Activated naive CD4-positive, alpha-beta T cell treated with anti-CD3 and anti-CD28 coated beads for 36 hours (primary cell): ENCODE measurements at regions of chr6 and their contacts with region 1.

Region 1: DNA sequence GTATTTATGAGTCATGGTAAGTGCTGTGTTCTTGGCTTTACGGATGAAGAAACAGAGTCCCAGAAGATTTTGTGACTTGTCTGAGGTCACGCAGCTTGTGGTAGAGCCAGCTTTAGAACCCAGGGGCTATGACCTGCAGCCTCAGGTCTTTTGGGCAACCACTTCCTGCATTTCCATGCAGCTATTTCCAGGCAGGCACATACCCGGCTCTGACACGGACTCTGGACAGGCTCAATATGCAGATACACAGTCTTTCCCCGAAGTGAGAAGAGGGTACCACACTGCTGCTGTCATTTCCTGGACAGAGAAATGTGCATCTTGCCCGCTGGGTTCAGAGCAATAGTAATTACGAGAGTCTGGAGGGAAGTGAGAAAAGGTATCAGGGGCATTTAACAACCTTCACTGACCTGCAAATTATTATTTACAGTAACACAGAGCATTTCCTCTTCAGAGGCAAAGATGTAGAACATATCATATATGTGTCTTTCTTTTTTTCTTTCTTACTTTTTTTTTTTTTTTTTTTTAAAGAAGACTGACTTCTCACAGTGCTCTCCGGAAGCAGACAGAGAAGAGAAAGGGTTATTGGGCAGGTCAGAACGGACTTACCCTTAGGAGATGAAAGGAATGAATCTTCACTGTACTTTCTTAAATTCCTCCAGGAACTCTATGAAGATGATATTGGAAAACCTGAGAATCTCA is 185.1 kb downstream of the CLIC5 start:
- DNase-seq: peak; percentile 76
- H3K4me3 Mint-ChIP-seq: peak overlapping the region; percentile 25
- H3K27ac Mint-ChIP-seq: peak overlapping the region; percentile 75
- H3K4me1 Mint-ChIP-seq: peaks cover 24% of the 10 kb centered on the region
- H3K27me3 Mint-ChIP-seq: peaks cover 6% of the 10 kb centered on the region

Region 2: GRCh38 chr6:45371924-45372573 is 458.5 kb before region 1 on chr6:
- CTCF ChIA-PET with region 1: no interaction called
- intact Hi-C with region 1: loop called (anchors 2 kb)
- DNase-seq: peak; percentile 15
- H3K4me3 Mint-ChIP-seq: no peak overlapping the region
- H3K27ac Mint-ChIP-seq: peak overlapping the region; percentile 47
- H3K4me1 Mint-ChIP-seq: peaks cover 35% of the 10 kb centered on the region
- H3K27me3 Mint-ChIP-seq: no peaks in the 10 kb centered on the region

Region 3: GRCh38 chr6:45486736-45487135 is 343.9 kb before region 1 on chr6:
- CTCF ChIA-PET with region 1: no interaction called
- intact Hi-C with region 1: loop called (anchors 5 kb)
- DNase-seq: peak; percentile 46
- H3K4me3 Mint-ChIP-seq: no peak overlapping the region
- H3K27ac Mint-ChIP-seq: peak overlapping the region; percentile 54
- H3K4me1 Mint-ChIP-seq: peaks cover 38% of the 10 kb centered on the region
- H3K27me3 Mint-ChIP-seq: no peaks in the 10 kb centered on the region

Region 4: GRCh38 chr6:45757443-45758130 is 73.0 kb before region 1 on chr6:
- CTCF ChIA-PET with region 1: no interaction called
- intact Hi-C with region 1: no loop called
- DNase-seq: no peak
- H3K4me3 Mint-ChIP-seq: no peak overlapping the region
- H3K27ac Mint-ChIP-seq: no peak overlapping the region
- H3K4me1 Mint-ChIP-seq: no peaks in the 10 kb centered on the region
- H3K27me3 Mint-ChIP-seq: peaks cover 9% of the 10 kb centered on the region

Region 5: GRCh38 chr6:45801471-45802289 is 28.9 kb before region 1 on chr6:
- CTCF ChIA-PET with region 1: no interaction called
- intact Hi-C with region 1: loop called (anchors 1 kb)
- DNase-seq: peak; percentile 51
- H3K4me3 Mint-ChIP-seq: no peak overlapping the region
- H3K27ac Mint-ChIP-seq: no peak overlapping the region
- H3K4me1 Mint-ChIP-seq: peaks cover 15% of the 10 kb centered on the region
- H3K27me3 Mint-ChIP-seq: peaks cover 10% of the 10 kb centered on the region